Activated CD4-positive, alpha-beta T cell treated with anti-CD3 and anti-CD28 coated beads for 36 hours (primary cell): ENCODE measurements at regions of chr1 and their contacts with region 1.

Region 1: DNA sequence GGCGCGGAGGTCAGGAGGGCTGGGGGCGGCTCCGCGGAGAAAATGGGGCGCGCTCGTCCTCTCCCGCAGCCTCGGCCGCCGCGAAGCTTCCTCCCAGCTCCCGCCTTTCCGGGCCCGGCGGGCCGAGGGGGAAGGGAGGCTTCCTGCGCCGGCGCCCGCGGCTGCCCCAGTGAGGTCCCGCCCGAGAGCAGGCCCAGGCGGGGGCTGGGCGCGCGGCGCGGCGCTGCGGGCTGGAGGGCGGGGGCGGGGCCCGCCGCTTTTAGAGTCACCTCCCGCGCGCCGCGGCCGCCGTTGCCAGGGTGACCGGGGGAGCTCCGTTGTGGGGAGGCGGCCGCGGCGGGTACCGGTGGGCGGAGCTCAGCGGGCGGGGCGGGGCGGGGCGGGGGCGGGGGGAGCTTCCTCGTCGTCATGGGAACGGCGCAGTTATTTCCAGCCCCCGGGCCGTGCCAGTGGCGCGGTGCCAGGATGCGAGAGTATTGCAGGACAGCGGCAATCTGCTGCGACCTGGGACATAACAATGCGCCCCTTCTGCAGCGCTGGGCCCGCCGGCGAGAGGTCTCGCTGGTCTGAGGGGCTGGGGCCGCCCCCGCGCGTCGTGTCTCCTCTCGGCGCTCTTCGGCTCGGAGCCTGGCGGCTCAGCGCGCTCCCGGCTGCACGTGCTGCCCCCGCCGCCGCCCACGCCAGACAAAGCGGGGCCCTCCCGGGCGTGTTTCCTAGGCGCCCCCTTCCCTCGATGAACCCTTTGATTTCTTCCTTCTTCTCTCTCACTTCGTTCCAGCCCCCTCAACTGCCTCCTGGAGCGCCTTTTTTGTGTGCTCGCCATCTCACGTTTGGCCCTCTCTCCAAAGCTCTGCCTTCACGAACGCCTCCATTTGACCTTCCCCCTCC is 16.9 kb downstream of the IER5 start:
- DNase-seq: peak; percentile 95
- ATAC-seq: peak; percentile 83
- H3K4me3 Mint-ChIP-seq: peak overlapping the region; percentile 72
- H3K27ac Mint-ChIP-seq: peak overlapping the region; percentile 55
- H3K4me1 Mint-ChIP-seq: peaks cover 59% of the 10 kb centered on the region
- H3K27me3 Mint-ChIP-seq: peaks cover 15% of the 10 kb centered on the region

Region 2: DNA sequence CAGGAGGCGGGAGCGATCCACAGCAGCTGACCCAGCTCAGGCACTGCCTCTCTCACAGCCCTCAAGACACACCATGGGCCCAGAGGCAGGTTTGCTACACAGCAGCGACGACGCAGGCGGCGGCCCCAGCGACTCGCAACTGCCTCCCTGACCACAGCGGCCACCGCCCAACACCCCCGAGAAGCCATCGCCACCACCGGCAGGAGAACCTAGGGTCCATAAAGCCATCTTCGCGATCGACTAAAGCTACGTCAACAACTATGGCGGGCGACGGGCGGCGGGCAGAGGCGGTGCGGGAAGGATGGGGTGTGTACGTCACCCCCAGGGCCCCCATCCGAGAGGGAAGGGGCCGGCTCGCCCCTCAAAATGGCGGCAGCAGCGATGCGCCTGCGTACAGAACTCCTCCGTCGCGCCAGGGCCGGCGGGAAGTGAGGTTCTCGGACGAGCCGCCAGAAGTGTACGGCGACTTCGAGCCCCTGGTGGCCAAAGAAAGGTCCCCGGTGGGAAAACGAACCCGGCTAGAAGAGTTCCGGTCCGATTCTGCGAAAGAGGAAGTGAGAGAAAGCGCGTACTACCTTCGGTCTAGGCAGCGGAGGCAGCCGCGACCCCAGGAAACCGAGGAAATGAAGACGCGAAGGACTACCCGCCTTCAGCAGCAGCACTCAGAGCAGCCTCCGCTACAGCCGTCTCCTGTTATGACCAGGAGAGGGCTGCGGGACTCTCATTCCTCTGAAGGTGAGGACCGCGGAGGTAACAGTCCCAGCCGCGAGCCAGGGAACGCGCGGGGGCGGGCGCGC is 1222.9 kb before region 1 on chr1 and contains the start of gene TOR1AIP1:
- CTCF ChIA-PET with region 1: no interaction called
- POLR2A ChIA-PET with region 1: no interaction called
- intact Hi-C with region 1: loop called in 1 of 2 experiments (anchors 10 kb)
- DNase-seq: peak; percentile 98
- ATAC-seq: peak; percentile 80
- H3K4me3 Mint-ChIP-seq: peak within 1 kb of the TSS; percentile 87
- H3K27ac Mint-ChIP-seq: peak within 1 kb of the TSS; percentile 98
- H3K4me1 Mint-ChIP-seq: peaks cover 59% of the 10 kb centered on the region
- H3K27me3 Mint-ChIP-seq: no peaks in the 10 kb centered on the region
- total RNA-seq, gene TOR1AIP1: 50.1 to 71.6 TPM

Region 3: GRCh38 chr1:179954493-179955297 is 1150.7 kb before region 1 on chr1 and contains the start of gene CEP350:
- CTCF ChIA-PET with region 1: no interaction called
- POLR2A ChIA-PET with region 1: no interaction called
- intact Hi-C with region 1: loop called in 1 of 2 experiments (anchors 10 kb)
- DNase-seq: peak; percentile 99
- ATAC-seq: peak; percentile 94
- H3K4me3 Mint-ChIP-seq: peak within 1 kb of the TSS; percentile 82
- H3K27ac Mint-ChIP-seq: peak within 1 kb of the TSS; percentile 98
- H3K4me1 Mint-ChIP-seq: peaks cover 47% of the 10 kb centered on the region
- H3K27me3 Mint-ChIP-seq: no peaks in the 10 kb centered on the region
- total RNA-seq, gene CEP350: 38.2 to 42.1 TPM

Region 4: DNA sequence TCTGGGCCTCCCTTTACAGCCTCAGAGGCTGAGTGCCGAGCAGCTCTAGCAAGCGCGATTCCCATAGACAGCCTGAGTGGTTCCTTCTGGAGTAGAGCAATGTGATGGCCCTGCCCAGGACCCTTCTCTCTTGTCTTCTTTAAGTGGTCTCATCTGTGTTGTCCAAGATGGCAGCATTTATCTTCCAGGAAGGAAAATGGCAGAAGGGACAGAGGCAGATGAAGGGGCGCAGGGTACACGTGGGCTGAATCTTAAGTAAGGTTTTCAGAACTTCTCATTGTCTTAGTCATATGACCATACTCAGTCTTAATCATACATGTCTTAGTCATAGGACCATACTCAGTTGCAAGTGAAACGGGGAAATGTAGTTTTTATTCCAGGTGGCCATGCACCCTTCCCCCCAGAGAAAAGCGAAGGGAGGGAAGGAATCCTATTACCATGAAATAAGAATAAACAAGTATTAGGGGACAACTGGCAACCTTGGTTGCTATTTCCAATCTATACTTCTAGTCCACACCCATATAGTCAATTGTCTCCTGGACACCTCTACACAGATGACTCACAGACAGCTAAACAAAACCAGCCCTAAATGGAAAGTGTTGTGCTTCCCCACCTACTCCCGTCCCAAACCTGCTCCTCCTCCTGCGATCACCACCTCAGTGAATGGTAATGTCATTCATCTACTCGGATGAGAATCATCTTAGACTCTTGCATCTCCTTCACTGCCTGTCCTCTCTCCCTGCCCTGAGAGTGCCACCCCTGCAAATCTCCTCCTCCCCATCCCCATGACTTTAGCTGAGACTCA is 533.3 kb before region 1 on chr1:
- CTCF ChIA-PET with region 1: no interaction called
- POLR2A ChIA-PET with region 1: no interaction called
- intact Hi-C with region 1: loop called in 1 of 2 experiments (anchors 5 kb)
- DNase-seq: peak; percentile 78
- ATAC-seq: peak; percentile 93
- H3K4me3 Mint-ChIP-seq: no peak overlapping the region
- H3K27ac Mint-ChIP-seq: peak overlapping the region; percentile 71
- H3K4me1 Mint-ChIP-seq: peaks cover 23% of the 10 kb centered on the region
- H3K27me3 Mint-ChIP-seq: peaks cover 12% of the 10 kb centered on the region

Region 5: DNA sequence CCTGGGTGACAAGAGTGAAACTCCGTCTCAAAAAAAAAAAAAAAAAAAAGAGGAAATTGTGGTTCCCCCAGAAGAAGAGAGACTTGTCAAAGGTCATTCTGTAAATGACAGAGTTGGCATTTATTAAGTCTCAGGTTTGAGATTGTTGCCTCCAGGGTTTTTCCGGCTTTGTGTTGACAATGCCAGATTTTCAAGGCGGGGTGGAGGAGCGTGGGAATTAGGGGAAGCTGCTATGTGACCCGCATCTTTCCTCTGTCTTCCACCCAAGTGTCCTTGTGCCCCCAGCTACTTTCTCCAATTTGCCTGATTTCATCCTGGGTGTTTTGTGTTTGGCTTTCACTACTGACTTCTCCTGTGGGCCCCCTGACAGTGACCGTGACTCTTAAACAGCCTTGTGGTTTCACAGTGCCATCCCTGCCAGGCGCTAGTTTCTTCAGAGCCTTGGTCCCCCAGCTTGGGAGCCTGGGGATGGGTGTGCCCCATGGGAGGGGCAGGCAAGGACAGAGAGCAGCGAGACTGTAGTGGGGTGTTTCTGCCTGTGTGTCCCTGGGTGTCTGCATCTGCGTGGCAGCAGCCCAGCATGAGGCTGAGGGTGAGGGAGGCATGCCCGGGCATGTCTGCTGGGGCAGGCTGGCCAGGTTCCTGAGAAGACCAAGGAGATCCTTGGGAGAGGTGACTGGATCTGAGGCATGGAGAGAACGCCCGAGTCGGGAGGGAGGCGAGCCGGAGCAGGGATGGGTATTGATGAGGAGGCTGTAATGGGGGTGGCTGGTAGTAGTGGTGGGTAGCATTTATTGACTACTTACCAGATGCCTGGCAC is 29.4 kb after region 1 on chr1:
- CTCF ChIA-PET with region 1: interaction called, 156 read pairs
- POLR2A ChIA-PET with region 1: interaction called, 15 read pairs
- intact Hi-C with region 1: loop called in 1 of 2 experiments (anchors 1 kb)
- DNase-seq: peak; percentile 64
- ATAC-seq: peak; percentile 68
- H3K4me3 Mint-ChIP-seq: peak overlapping the region; percentile 32
- H3K27ac Mint-ChIP-seq: peak overlapping the region; percentile 88
- H3K4me1 Mint-ChIP-seq: peaks cover 49% of the 10 kb centered on the region
- H3K27me3 Mint-ChIP-seq: peaks cover 8% of the 10 kb centered on the region